Motor neuron (in vitro differentiated cells): ENCODE measurements at regions of chr16 and their contacts with region 1.

Region 1: GRCh38 chr16:54929090-54930004 is 1.3 kb upstream of the IRX5 start:
- ATAC-seq: peak; percentile 71 to 86 (median 83)
- H3K4me3 ChIP-seq: peak overlapping the region; percentile 61 to 96 (median 82)
- H3K27ac ChIP-seq: peak overlapping the region; percentile 94 to 96
- H3K4me1 ChIP-seq: peaks cover 4 to 5% of the 10 kb centered on the region in 2 donors

Region 2: DNA sequence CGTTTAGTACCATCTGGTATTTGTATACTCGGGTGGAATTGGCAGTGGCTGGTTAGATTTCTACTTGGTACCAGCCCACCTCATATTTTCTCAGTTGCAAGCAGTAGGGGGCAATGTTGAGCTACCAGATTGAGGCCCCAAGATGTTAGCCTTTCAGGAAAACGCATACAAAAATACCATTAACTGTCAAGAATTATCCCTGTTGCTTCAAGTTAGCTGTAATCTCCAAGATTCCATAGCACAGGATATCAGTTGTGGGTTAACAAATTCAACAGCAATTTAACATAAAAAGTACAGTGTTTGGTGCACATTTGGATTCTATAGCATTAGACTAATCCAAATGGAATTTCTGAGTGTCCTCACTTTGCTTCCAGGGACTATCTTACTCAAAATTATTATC is 1037.2 kb before region 1 on chr16:
- in situ Hi-C with region 1: loop called in 1 of 9 experiments (anchors 25 kb)
- ATAC-seq: peak; percentile 49 to 78 (median 71)
- H3K4me3 ChIP-seq: no peak overlapping the region
- H3K27ac ChIP-seq: no peak overlapping the region
- H3K4me1 ChIP-seq: peaks cover 7 to 46% of the 10 kb centered on the region in 2 donors

Region 3: GRCh38 chr16:54286090-54286993 is 643.0 kb before region 1 on chr16 and contains the start of gene IRX3:
- in situ Hi-C with region 1: loop called in 5 of 9 experiments (anchors 10 to 25 kb)
- ATAC-seq: peak; percentile 59 to 76 (median 72)
- H3K4me3 ChIP-seq: peak within 1 kb of the TSS; percentile 48 to 95 (median 80)
- H3K27ac ChIP-seq: peak within 1 kb of the TSS; percentile 79 to 91
- H3K4me1 ChIP-seq: peaks cover 23 to 25% of the 10 kb centered on the region in 2 donors
- total RNA-seq, gene IRX3: 1.1 to 42.1 (median 13.0) TPM

Region 4: GRCh38 chr16:55370762-55371482 is 441.6 kb after region 1 on chr16:
- in situ Hi-C with region 1: loop called in 5 of 9 experiments (anchors 25 kb)
- ATAC-seq: peak; percentile 94 to 100 (median 99)
- H3K4me3 ChIP-seq: peak overlapping the region; percentile 2 to 24 (median 11)
- H3K27ac ChIP-seq: no peak overlapping the region
- H3K4me1 ChIP-seq: peaks cover 11 to 53% of the 10 kb centered on the region in 2 donors